ENCODE measurements at regions of chr7 and their contacts with region 1.

Region 1: DNA sequence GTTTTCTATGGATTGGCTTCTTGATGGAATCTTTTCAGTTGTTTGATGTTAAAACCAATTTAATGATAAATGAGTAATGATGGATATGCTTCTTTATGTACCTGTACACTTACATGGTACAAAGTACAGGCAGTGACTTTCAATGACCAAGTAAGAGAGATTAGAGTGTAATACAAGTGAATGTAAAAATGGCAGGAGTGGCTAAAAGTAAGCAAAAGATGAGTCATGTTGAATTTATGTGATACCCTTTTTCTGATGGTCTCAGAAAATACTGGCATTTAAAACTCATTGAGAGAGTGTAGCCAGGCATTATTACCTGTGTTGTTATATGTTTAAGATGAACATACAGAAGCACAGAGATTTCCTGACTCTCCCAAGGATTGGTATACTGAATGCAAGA is 97.1 kb downstream of the GPR85 start:
- DNase-seq: no peak
- ATAC-seq: no peak
- H3K4me3 ChIP-seq: no peak overlapping the region
- H3K27ac ChIP-seq: no peak overlapping the region
- H3K4me1 ChIP-seq: no peaks in the 10 kb centered on the region
- H3K27me3 ChIP-seq: peaks cover 0 to 2% (median 0%) of the 10 kb centered on the region in 3 donors
- CTCF ChIP-seq: no peak

Region 2: GRCh38 chr7:112721366-112721765 is 268.2 kb before region 1 on chr7:
- intact Hi-C with region 1: no loop called
- DNase-seq: no peak
- ATAC-seq: no peak
- H3K4me3 ChIP-seq: no peak overlapping the region
- H3K27ac ChIP-seq: no peak overlapping the region
- H3K4me1 ChIP-seq: no peaks in the 10 kb centered on the region
- H3K27me3 ChIP-seq: peaks cover 0 to 3% (median 0%) of the 10 kb centered on the region in 3 donors
- CTCF ChIP-seq: no peak

Region 3: DNA sequence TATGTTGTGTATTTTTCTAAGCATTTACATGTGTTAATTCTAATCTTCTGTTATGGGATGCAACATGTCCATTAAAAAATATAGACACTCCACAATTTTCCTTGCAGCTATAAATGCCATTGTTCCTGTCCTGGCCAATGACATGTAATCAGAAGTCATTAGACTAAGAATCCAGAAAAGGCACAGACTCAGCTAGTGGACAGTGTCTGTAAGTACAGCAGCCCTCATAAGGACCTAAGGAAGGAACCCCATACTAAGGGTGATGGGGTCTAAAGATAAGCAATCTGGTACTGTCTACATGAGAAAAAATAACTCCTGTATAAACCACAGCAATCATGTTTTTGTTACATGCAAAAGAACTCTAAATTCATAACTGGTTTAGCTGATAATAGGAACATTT is 18.8 kb before region 1 on chr7:
- intact Hi-C with region 1: loop called in 1 of 2 experiments (anchors 2 kb)
- DNase-seq: no peak
- ATAC-seq: no peak
- H3K4me3 ChIP-seq: no peak overlapping the region
- H3K27ac ChIP-seq: no peak overlapping the region
- H3K4me1 ChIP-seq: no peaks in the 10 kb centered on the region
- H3K27me3 ChIP-seq: no peaks in the 10 kb centered on the region
- CTCF ChIP-seq: no peak

Region 4: GRCh38 chr7:113109718-113110117 is 120.2 kb after region 1 on chr7:
- intact Hi-C with region 1: no loop called
- DNase-seq: no peak
- ATAC-seq: no peak
- H3K4me3 ChIP-seq: no peak overlapping the region
- H3K27ac ChIP-seq: no peak overlapping the region
- H3K4me1 ChIP-seq: no peaks in the 10 kb centered on the region
- H3K27me3 ChIP-seq: no peaks in the 10 kb centered on the region
- CTCF ChIP-seq: no peak